H1 (cell line): ENCODE measurements at regions of chr5 and their contacts with region 1.

Region 1: GRCh38 chr5:91419571-91420537 is 36.7 kb upstream of the ARRDC3 start:
- DNase-seq: peak in 1 of 2 experiments; percentile 71
- H3K4me3 ChIP-seq: no peak overlapping the region
- H3K27ac ChIP-seq: no peak overlapping the region
- H3K4me1 ChIP-seq: peaks cover 0 to 3% (median under 1%) of the 10 kb centered on the region in 4 experiments; a peak in 3 of 7 replicates
- H3K27me3 ChIP-seq: no peaks in the 10 kb centered on the region
- CTCF ChIP-seq: peak in 2 of 3 experiments; percentile 42 to 50; a peak in 3 of 4 replicates
- EP300 ChIP-seq: no peak
- POLR2A ChIP-seq: no peak
- RAD21 ChIP-seq: peak; percentile 68 to 79

Region 2: DNA sequence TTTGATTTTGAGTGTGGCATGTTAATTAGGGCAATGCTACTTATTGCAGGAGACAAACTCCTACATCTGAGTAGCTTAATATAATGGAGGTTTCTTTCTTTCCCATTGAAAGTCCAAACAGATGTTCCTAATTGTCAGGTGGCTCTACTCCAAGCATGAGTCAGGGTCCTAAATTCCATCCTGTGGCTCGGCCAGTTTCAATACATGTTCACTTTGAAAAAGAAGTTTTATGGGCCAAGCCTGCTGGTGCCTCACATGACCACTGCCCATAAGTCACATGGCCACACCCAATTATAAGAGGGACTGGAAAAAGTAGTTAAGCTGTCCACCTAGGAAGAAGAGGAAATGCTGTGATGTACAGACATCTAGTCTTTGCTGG is 207.2 kb before region 1 on chr5:
- CTCF ChIA-PET with region 1: interaction called, 122 read pairs
- POLR2A ChIA-PET with region 1: no interaction called
- DNase-seq: no peak
- H3K4me3 ChIP-seq: no peak overlapping the region
- H3K27ac ChIP-seq: no peak overlapping the region
- H3K4me1 ChIP-seq: no peaks in the 10 kb centered on the region
- H3K27me3 ChIP-seq: no peaks in the 10 kb centered on the region
- CTCF ChIP-seq: no peak
- EP300 ChIP-seq: no peak
- POLR2A ChIP-seq: no peak
- RAD21 ChIP-seq: no peak

Region 3: GRCh38 chr5:91225848-91226686 is 193.8 kb before region 1 on chr5:
- CTCF ChIA-PET with region 1: interaction called, 122 read pairs
- POLR2A ChIA-PET with region 1: no interaction called
- DNase-seq: peak; percentile 15 to 77
- H3K4me3 ChIP-seq: no peak overlapping the region
- H3K27ac ChIP-seq: no peak overlapping the region
- H3K4me1 ChIP-seq: no peaks in the 10 kb centered on the region; a peak in 2 of 7 replicates
- H3K27me3 ChIP-seq: no peaks in the 10 kb centered on the region
- CTCF ChIP-seq: peak; percentile 63 to 95 (median 74)
- EP300 ChIP-seq: no peak
- POLR2A ChIP-seq: no peak
- RAD21 ChIP-seq: peak; percentile 93

Region 4: GRCh38 chr5:91408710-91409109 is 11.1 kb before region 1 on chr5:
- CTCF ChIA-PET with region 1: interaction called, 15 read pairs
- POLR2A ChIA-PET with region 1: interaction called, 3 read pairs
- DNase-seq: no peak
- H3K4me3 ChIP-seq: no peak overlapping the region
- H3K27ac ChIP-seq: no peak overlapping the region
- H3K4me1 ChIP-seq: no peaks in the 10 kb centered on the region
- H3K27me3 ChIP-seq: no peaks in the 10 kb centered on the region
- CTCF ChIP-seq: no peak
- EP300 ChIP-seq: no peak
- POLR2A ChIP-seq: no peak
- RAD21 ChIP-seq: no peak